ENCODE measurements at regions of chr1 and their contacts with region 1.

Region 1: GRCh38 chr1:9874959-9875635 is 35.0 kb downstream of the CTNNBIP1 start:
- DNase-seq: peak; percentile 65 to 72 (median 66)
- H3K4me3 ChIP-seq: no peak overlapping the region
- H3K4me3 Mint-ChIP-seq: peak overlapping the region in 1 of 8 donors; percentile 31
- H3K27ac ChIP-seq: no peak overlapping the region
- H3K27ac Mint-ChIP-seq: peak overlapping the region in 4 of 7 donors; percentile 18 to 36 (median 32)
- H3K4me1 ChIP-seq: no peaks in the 10 kb centered on the region
- H3K4me1 Mint-ChIP-seq: peaks cover 0 to 5% (median 3%) of the 10 kb centered on the region in 4 donors
- H3K27me3 ChIP-seq: no peaks in the 10 kb centered on the region
- H3K27me3 Mint-ChIP-seq: no peaks in the 10 kb centered on the region

Region 2: DNA sequence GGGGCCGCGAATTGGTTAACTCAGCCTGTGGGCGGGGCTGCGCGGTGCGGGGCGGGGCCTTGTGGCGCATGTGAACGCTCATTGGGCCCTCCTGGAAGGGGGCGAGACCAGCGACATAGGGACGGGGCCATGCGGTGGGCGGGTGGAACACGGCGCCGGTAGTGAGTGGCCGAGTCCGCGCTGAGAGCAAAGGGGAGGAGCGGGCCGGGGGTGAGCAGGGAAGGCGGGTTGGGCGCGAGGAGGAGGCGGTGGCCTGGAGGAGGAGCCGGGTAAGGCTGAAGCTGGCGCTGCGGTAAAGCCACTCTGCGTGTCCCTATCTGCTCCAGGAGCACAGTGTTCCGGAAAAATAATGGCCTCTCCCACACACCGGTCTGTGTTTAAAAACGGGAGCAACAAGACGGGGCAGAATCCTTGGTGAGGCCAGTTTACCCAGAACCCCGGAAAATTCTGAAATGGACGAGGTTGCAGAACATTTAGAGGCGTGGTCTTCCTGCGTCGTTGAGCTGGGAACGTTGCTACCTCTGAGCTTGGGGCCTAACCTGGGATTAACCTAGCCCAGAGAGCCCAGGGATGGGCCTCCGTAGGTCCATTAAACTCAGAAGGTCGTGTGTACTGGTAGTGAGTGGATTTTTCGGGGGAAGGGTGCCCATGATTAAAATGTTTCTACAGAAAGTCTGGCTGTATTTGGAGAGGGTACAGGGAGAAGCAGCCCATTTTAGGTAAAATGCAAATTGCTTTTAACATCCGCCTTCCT is 35.5 kb after region 1 on chr1:
- CTCF ChIA-PET with region 1: interaction called, 5 read pairs
- POLR2A ChIA-PET with region 1: no interaction called
- intact Hi-C with region 1: loop called (anchors 2 kb)
- DNase-seq: peak; percentile 100
- H3K4me3 ChIP-seq: peak overlapping the region; percentile 71 to 78
- H3K4me3 Mint-ChIP-seq: peak overlapping the region; percentile 92 to 99 (median 96)
- H3K27ac ChIP-seq: peak overlapping the region; percentile 64
- H3K27ac Mint-ChIP-seq: peak overlapping the region; percentile 85 to 99 (median 98)
- H3K4me1 ChIP-seq: peaks cover 16% of the 10 kb centered on the region
- H3K4me1 Mint-ChIP-seq: peaks cover 27 to 39% (median 34%) of the 10 kb centered on the region in 4 donors
- H3K27me3 ChIP-seq: no peaks in the 10 kb centered on the region
- H3K27me3 Mint-ChIP-seq: no peaks in the 10 kb centered on the region

Region 3: GRCh38 chr1:9942939-9943788 is 68.1 kb after region 1 on chr1 and contains the starts of genes LZIC and NMNAT1:
- CTCF ChIA-PET with region 1: interaction called, 12 read pairs
- POLR2A ChIA-PET with region 1: interaction called, 4 read pairs
- intact Hi-C with region 1: loop called (anchors 1 kb)
- DNase-seq: peak; percentile 84 to 90 (median 85)
- H3K4me3 ChIP-seq: peak within 1 kb of the TSS; percentile 91 to 100
- H3K4me3 Mint-ChIP-seq: peak within 1 kb of the TSS; percentile 94 to 97 (median 97)
- H3K27ac ChIP-seq: peak within 1 kb of the TSS; percentile 92
- H3K27ac Mint-ChIP-seq: peak within 1 kb of the TSS; percentile 89 to 99 (median 98)
- H3K4me1 ChIP-seq: peaks cover 18% of the 10 kb centered on the region
- H3K4me1 Mint-ChIP-seq: peaks cover 11 to 35% (median 21%) of the 10 kb centered on the region in 4 donors
- H3K27me3 ChIP-seq: no peaks in the 10 kb centered on the region
- H3K27me3 Mint-ChIP-seq: no peaks in the 10 kb centered on the region
- total RNA-seq, gene LZIC: 34.0 to 34.8 TPM
- total RNA-seq, gene NMNAT1: 6.1 to 6.7 TPM

Region 4: DNA sequence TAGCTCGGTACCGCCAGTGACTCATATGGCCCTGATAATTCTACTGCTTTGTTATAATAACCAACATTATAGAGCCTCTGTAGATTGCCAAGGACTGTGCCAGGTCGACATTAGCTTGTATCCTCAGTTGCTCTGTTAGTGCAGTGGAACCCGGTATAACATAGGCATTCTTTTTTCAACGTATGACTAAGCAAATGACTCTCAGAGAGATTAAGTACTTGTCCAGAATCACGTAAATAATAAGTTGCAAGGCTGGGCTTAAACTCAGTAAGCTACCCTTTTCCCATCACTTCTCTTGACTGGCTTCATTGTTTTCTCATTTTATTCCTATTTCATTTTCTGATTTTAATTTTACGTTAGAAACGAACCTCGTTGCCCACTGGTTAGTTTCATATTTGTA is 242.8 kb after region 1 on chr1:
- CTCF ChIA-PET with region 1: no interaction called
- POLR2A ChIA-PET with region 1: no interaction called
- intact Hi-C with region 1: no loop called
- DNase-seq: no peak
- H3K4me3 ChIP-seq: no peak overlapping the region
- H3K4me3 Mint-ChIP-seq: no peak overlapping the region
- H3K27ac ChIP-seq: no peak overlapping the region
- H3K27ac Mint-ChIP-seq: no peak overlapping the region
- H3K4me1 ChIP-seq: no peaks in the 10 kb centered on the region
- H3K4me1 Mint-ChIP-seq: no peaks in the 10 kb centered on the region
- H3K27me3 ChIP-seq: no peaks in the 10 kb centered on the region
- H3K27me3 Mint-ChIP-seq: no peaks in the 10 kb centered on the region

Region 5: DNA sequence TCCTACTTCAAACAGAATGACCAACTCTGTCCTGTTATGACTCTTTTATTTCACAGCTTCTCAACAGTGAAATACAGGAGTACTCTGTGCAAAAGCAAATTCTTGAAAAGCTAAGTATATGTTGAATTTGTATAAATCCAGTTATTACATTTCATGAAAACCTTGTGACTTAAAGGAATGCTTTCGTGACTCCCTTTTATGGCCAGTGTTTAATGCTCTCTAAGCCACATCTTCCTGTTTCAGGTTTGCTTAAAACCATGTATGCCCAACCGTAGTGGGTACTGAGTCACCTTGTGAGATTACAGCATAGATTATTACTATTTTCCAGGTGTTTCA is 295.1 kb after region 1 on chr1:
- CTCF ChIA-PET with region 1: no interaction called
- POLR2A ChIA-PET with region 1: no interaction called
- intact Hi-C with region 1: no loop called
- DNase-seq: no peak
- H3K4me3 ChIP-seq: no peak overlapping the region
- H3K4me3 Mint-ChIP-seq: peak overlapping the region in 3 of 8 donors; percentile 4 to 39 (median 26)
- H3K27ac ChIP-seq: no peak overlapping the region
- H3K27ac Mint-ChIP-seq: peak overlapping the region in 5 of 7 donors; percentile 43 to 93 (median 80)
- H3K4me1 ChIP-seq: peaks cover 19% of the 10 kb centered on the region
- H3K4me1 Mint-ChIP-seq: peaks cover 13 to 25% (median 15%) of the 10 kb centered on the region in 4 donors
- H3K27me3 ChIP-seq: no peaks in the 10 kb centered on the region
- H3K27me3 Mint-ChIP-seq: no peaks in the 10 kb centered on the region

Region 6: DNA sequence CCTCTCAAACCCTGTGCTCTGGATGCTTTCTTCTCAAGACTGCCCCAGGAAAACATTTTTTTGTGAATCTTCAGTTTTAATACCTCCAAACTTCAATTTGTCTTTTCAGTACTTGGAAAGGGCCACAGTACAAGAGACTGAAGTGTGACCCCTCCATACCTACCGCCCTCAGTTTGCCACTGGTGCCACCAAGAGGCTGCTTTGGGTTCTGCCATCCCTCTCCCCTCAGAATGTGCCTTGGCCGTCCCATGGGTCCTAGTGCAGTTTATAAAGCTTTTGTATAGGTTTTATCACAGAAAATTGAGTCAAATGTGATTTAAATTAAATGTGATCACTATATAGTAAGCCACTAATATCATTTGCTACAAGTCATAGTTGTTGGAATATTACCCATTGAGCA is 462.9 kb after region 1 on chr1:
- CTCF ChIA-PET with region 1: no interaction called
- POLR2A ChIA-PET with region 1: no interaction called
- intact Hi-C with region 1: loop called (anchors 10 kb)
- DNase-seq: peak; percentile 24 to 42 (median 27)
- H3K4me3 ChIP-seq: no peak overlapping the region
- H3K4me3 Mint-ChIP-seq: no peak overlapping the region
- H3K27ac ChIP-seq: no peak overlapping the region
- H3K27ac Mint-ChIP-seq: no peak overlapping the region
- H3K4me1 ChIP-seq: no peaks in the 10 kb centered on the region
- H3K4me1 Mint-ChIP-seq: no peaks in the 10 kb centered on the region
- H3K27me3 ChIP-seq: no peaks in the 10 kb centered on the region
- H3K27me3 Mint-ChIP-seq: no peaks in the 10 kb centered on the region